ENCODE measurements at regions of chr10 and their contacts with region 1.

Region 1: DNA sequence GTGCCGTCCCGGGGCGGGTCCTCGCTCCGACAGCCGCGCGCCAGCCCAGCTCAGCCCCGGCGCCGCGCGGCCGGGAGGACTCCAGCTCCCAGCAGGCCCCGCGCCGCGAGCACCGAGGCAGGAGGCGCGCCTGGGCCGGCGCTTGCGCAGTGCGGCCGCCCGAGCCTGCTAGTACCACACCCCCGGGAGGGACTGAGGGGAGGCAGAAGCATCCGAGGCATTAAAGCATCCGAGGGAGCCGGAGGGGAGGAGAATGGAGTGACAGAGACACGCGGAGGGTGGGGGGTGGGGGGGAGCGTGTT is at the start of gene GRK5:
- DNase-seq: peak; percentile 98
- H3K4me3 ChIP-seq: peak within 1 kb of the TSS; percentile 60 to 87 (median 69)
- H3K27ac ChIP-seq: peak within 1 kb of the TSS; percentile 92 to 100 (median 98)
- H3K4me1 ChIP-seq: peaks cover 0 to 50% (median 43%) of the 10 kb centered on the region in 4 donors
- H3K27me3 ChIP-seq: no peaks in the 10 kb centered on the region
- CTCF ChIP-seq: no peak
- EP300 ChIP-seq: no peak
- POLR2A ChIP-seq: no peak
- total RNA-seq, gene GRK5: 19.8 to 32.4 (median 22.2) TPM

Region 2: GRCh38 chr10:118662228-118663035 is 544.9 kb before region 1 on chr10:
- intact Hi-C with region 1: no loop called
- DNase-seq: peak; percentile 55
- H3K4me3 ChIP-seq: no peak overlapping the region
- H3K27ac ChIP-seq: no peak overlapping the region
- H3K4me1 ChIP-seq: no peaks in the 10 kb centered on the region
- H3K27me3 ChIP-seq: peaks cover 0 to 3% (median 0%) of the 10 kb centered on the region in 3 donors
- CTCF ChIP-seq: no peak
- EP300 ChIP-seq: no peak
- POLR2A ChIP-seq: no peak

Region 3: DNA sequence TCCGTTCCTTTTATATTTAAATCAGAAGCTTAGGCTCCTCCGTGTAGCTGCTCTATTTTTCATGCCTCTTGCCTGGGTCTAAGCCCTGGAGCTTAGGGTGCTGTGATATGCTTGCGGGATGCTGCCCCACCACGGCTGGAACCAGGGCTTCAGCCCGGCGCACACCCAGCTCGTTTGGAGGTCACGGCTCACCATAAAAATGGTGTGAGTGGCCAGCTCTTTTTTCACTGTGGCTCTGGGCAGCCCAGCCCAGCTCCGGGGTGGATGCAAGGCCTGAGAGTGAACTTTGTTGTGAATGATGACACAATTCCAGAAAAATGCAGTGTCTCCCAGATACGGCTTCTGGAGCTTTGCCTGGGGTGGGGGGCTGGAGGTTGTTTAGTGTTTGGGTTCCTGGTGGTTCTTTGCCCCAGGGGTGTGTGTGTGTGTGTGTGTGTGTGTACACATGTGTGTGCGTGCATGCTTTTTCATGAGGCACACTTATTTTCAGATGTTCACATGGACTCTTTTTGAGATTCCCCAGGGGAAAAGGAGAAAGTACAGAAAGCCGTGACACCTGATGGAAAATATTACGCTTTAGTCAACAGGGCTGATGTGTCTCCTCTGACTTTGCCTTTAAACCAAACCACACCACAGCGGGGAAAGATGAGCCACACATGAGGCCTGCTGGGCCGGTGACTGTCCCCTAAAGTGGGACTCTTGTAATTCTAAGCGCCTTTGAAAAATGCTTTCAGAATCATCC is 46.3 kb after region 1 on chr10:
- intact Hi-C with region 1: loop called (anchors 1 kb)
- DNase-seq: peak; percentile 92
- H3K4me3 ChIP-seq: no peak overlapping the region
- H3K27ac ChIP-seq: peak overlapping the region; percentile 83 to 94 (median 87)
- H3K4me1 ChIP-seq: peaks cover 0 to 81% (median 71%) of the 10 kb centered on the region in 4 donors
- H3K27me3 ChIP-seq: no peaks in the 10 kb centered on the region
- CTCF ChIP-seq: no peak
- EP300 ChIP-seq: peak in 3 of 4 donors; percentile 26 to 51 (median 28)
- POLR2A ChIP-seq: no peak

Region 4: DNA sequence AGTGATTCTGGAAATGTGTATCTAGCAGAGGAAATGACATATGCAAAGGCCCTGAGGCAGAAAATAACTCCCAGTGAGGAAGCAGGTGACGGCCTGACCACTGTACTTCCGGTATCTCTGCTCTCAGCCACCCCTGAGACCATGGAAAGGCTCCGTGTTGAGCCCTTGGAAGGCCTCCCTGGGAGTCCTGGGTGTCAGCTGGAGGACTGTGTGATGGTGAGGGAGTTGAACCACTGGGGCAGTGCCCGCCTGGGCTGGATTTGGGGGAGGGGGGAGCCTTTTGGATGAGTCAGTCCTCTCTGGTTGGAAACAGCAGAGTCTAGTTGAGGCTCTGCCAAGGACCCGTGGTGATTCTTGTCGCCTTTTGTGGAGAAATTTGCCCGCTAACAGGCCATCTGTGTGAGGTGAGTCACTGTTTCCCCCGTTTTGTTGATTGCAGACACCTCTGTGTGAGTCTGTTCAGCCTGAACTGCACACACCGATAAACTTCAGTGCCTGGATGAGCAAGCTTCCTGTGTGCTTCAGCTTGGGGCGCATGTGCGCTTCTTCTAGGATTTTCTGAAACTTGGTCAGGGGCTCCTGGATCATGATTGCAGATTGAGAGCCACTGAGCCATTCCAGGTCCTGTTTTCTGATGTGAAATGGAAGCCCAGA is 98.7 kb after region 1 on chr10:
- intact Hi-C with region 1: loop called (anchors 2 kb)
- DNase-seq: peak; percentile 95
- H3K4me3 ChIP-seq: no peak overlapping the region
- H3K27ac ChIP-seq: peak overlapping the region; percentile 73 to 92 (median 79)
- H3K4me1 ChIP-seq: peaks cover 0 to 91% (median 71%) of the 10 kb centered on the region in 4 donors
- H3K27me3 ChIP-seq: no peaks in the 10 kb centered on the region
- CTCF ChIP-seq: no peak
- EP300 ChIP-seq: peak in 1 of 4 donors; percentile 81
- POLR2A ChIP-seq: no peak

Region 5: GRCh38 chr10:119383174-119383856 is 176.0 kb after region 1 on chr10:
- intact Hi-C with region 1: no loop called
- DNase-seq: no peak
- H3K4me3 ChIP-seq: no peak overlapping the region
- H3K27ac ChIP-seq: no peak overlapping the region
- H3K4me1 ChIP-seq: peaks cover 0 to 13% (median 9%) of the 10 kb centered on the region in 4 donors
- H3K27me3 ChIP-seq: no peaks in the 10 kb centered on the region
- CTCF ChIP-seq: no peak
- EP300 ChIP-seq: no peak
- POLR2A ChIP-seq: no peak

Region 6: GRCh38 chr10:119489991-119490326 is 282.6 kb after region 1 on chr10:
- intact Hi-C with region 1: loop called (anchors 2 kb)
- DNase-seq: no peak
- H3K4me3 ChIP-seq: peak overlapping the region in 2 of 4 donors; percentile 39 to 40
- H3K27ac ChIP-seq: peak overlapping the region in 2 of 4 donors; percentile 22 to 25
- H3K4me1 ChIP-seq: peaks cover 0 to 26% (median 20%) of the 10 kb centered on the region in 4 donors
- H3K27me3 ChIP-seq: no peaks in the 10 kb centered on the region
- CTCF ChIP-seq: peak in 1 of 4 experiments; percentile 40
- EP300 ChIP-seq: no peak
- POLR2A ChIP-seq: no peak